H1 (cell line): ENCODE measurements at regions of chr18 and their contacts with region 1.

Region 1: GRCh38 chr18:34764451-34764850 is 54.4 kb downstream of the DTNA start:
- DNase-seq: no peak
- H3K4me3 ChIP-seq: no peak overlapping the region
- H3K27ac ChIP-seq: no peak overlapping the region
- H3K4me1 ChIP-seq: no peaks in the 10 kb centered on the region
- H3K27me3 ChIP-seq: no peaks in the 10 kb centered on the region
- CTCF ChIP-seq: peak in 1 of 3 experiments; percentile 40; a peak in 1 of 4 replicates
- EP300 ChIP-seq: no peak
- POLR2A ChIP-seq: no peak
- RAD21 ChIP-seq: no peak

Region 2: GRCh38 chr18:34676816-34677574 is 87.5 kb before region 1 on chr18:
- CTCF ChIA-PET with region 1: interaction called, 10 read pairs
- POLR2A ChIA-PET with region 1: no interaction called
- DNase-seq: no peak
- H3K4me3 ChIP-seq: no peak overlapping the region
- H3K27ac ChIP-seq: no peak overlapping the region
- H3K4me1 ChIP-seq: no peaks in the 10 kb centered on the region
- H3K27me3 ChIP-seq: no peaks in the 10 kb centered on the region
- CTCF ChIP-seq: no peak
- EP300 ChIP-seq: no peak
- POLR2A ChIP-seq: no peak
- RAD21 ChIP-seq: no peak

Region 3: DNA sequence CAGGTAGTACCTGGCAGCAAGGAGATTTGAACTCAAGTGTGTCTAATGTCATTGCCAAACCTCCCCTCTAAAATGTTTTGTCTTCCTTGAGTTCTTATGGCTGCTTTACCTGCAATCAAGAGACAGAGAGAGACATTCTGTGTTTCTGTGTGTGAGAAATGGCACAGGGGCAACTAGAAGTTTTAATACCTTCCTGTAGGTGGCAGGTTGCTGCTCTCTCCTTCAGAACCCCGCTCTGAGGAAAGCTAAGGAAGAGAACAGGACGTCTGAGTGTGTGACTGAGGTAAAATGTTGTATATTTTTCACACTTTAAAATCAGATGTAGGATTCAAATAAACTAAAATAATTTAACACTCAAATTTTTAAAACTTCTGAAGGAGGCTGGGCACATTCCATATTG is 35.2 kb before region 1 on chr18:
- CTCF ChIA-PET with region 1: interaction called, 27 read pairs
- POLR2A ChIA-PET with region 1: no interaction called
- DNase-seq: peak in 1 of 2 experiments; percentile 27
- H3K4me3 ChIP-seq: no peak overlapping the region
- H3K27ac ChIP-seq: no peak overlapping the region
- H3K4me1 ChIP-seq: peaks cover 0 to 5% (median 1%) of the 10 kb centered on the region in 4 experiments; a peak in 3 of 7 replicates
- H3K27me3 ChIP-seq: no peaks in the 10 kb centered on the region
- CTCF ChIP-seq: peak; percentile 13 to 80 (median 54)
- EP300 ChIP-seq: no peak
- POLR2A ChIP-seq: no peak
- RAD21 ChIP-seq: peak; percentile 43 to 51; a peak in 3 of 4 replicates

Region 4: GRCh38 chr18:34752056-34752455 is 12.4 kb before region 1 on chr18:
- CTCF ChIA-PET with region 1: interaction called, 10 read pairs
- POLR2A ChIA-PET with region 1: no interaction called
- DNase-seq: no peak
- H3K4me3 ChIP-seq: no peak overlapping the region
- H3K27ac ChIP-seq: no peak overlapping the region
- H3K4me1 ChIP-seq: no peaks in the 10 kb centered on the region
- H3K27me3 ChIP-seq: no peaks in the 10 kb centered on the region
- CTCF ChIP-seq: no peak
- EP300 ChIP-seq: no peak
- POLR2A ChIP-seq: no peak
- RAD21 ChIP-seq: no peak

Region 5: DNA sequence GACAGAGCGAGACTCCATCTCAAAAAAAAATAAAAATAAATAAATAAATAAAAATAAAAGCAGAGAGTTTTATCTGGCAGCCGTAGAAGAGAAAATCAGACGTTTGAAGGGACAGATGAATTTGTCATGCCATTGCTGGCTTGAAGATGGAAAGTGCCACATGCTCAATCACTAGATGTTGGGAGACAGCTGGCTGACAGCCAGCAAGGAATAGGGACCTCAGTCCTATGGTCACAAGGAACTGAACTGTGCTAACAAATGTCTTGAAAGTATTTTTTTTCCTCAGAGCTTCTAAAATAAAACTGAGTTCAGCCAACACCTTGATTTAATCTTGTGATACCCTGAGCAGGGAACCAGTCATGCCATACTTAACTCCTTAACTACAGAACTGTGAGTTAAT is 11.0 kb after region 1 on chr18:
- CTCF ChIA-PET with region 1: interaction called, 17 read pairs
- POLR2A ChIA-PET with region 1: no interaction called
- DNase-seq: no peak
- H3K4me3 ChIP-seq: no peak overlapping the region
- H3K27ac ChIP-seq: no peak overlapping the region
- H3K4me1 ChIP-seq: no peaks in the 10 kb centered on the region
- H3K27me3 ChIP-seq: no peaks in the 10 kb centered on the region
- CTCF ChIP-seq: no peak
- EP300 ChIP-seq: no peak
- POLR2A ChIP-seq: no peak
- RAD21 ChIP-seq: no peak

Region 6: GRCh38 chr18:34787931-34788532 is 23.6 kb after region 1 on chr18:
- CTCF ChIA-PET with region 1: interaction called, 29 read pairs
- POLR2A ChIA-PET with region 1: no interaction called
- DNase-seq: no peak
- H3K4me3 ChIP-seq: no peak overlapping the region
- H3K27ac ChIP-seq: no peak overlapping the region
- H3K4me1 ChIP-seq: no peaks in the 10 kb centered on the region; a peak in 1 of 7 replicates
- H3K27me3 ChIP-seq: peaks cover 0 to 1% (median 0%) of the 10 kb centered on the region in 4 experiments; a peak in 1 of 7 replicates
- CTCF ChIP-seq: peak in 2 of 3 experiments; percentile 67; a peak in 3 of 4 replicates
- EP300 ChIP-seq: no peak
- POLR2A ChIP-seq: no peak
- RAD21 ChIP-seq: peak; percentile 86 to 88